Posterior vena cava (tissue), 2 donors: ENCODE measurements at regions of chr16 and their contacts with region 1.

Region 1: DNA sequence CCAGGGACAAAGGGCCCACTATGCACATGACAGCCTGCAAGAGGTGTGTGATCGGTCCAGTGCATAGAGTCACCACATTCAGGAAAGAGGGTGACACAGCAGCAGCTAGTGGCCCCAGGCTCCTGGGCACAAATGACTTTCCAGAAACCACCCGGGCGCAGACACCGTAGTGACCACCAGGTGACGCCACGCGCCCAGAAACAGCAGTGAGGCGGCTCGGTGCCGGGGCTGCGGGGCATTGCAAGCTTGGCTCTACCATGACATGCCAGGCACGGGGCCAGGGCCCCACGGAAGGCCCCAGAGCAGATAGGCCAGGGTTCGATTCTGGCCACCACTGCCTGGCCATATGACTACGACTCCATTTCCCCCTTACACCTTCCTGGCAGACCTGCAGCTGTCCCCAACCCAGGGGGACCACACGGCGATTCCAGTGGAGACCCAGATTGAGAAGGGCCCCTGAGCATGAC is 6.7 kb downstream of the RHBDF1 start:
- DNase-seq: peak; percentile 96

Region 2: GRCh38 chr16:89850-90302 is 24.2 kb after region 1 on chr16:
- intact Hi-C with region 1: loop called in 1 of 2 experiments (anchors 1 kb)
- DNase-seq: no peak

Region 3: DNA sequence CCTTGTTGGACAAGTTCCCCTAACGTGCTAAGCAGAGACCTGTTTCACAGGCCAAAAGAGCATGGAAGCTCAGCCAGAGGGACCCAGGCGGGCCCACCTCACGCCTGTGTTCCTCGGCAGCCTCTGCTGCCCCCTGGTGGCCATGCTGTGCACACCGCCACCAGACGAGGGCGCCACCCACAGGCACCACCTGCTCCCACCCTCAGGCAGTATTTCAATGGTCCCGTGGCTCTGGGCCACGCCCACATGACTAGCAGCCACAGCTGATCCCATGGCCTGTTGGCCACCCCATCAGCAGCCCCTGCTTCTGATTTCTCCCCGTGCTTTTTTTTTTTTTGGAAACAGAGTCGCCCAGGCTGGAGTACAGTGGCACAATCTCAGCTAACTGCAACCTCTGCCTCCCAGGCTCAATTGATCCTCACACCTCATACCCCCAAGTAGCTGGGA is 31.3 kb after region 1 on chr16:
- intact Hi-C with region 1: loop called in 1 of 2 experiments (anchors 2 kb)
- DNase-seq: peak; percentile 97

Region 4: GRCh38 chr16:477758-478157 is 412.1 kb after region 1 on chr16:
- intact Hi-C with region 1: no loop called
- DNase-seq: no peak